Activated CD8-positive, alpha-beta memory T cell treated with anti-CD3 and anti-CD28 coated beads, Interleukin-2, amount 10 ng/mL, durations not matched to agents 7 days and 5 days (primary cell): ENCODE measurements at regions of chr1 and their contacts with region 1.

Region 1: DNA sequence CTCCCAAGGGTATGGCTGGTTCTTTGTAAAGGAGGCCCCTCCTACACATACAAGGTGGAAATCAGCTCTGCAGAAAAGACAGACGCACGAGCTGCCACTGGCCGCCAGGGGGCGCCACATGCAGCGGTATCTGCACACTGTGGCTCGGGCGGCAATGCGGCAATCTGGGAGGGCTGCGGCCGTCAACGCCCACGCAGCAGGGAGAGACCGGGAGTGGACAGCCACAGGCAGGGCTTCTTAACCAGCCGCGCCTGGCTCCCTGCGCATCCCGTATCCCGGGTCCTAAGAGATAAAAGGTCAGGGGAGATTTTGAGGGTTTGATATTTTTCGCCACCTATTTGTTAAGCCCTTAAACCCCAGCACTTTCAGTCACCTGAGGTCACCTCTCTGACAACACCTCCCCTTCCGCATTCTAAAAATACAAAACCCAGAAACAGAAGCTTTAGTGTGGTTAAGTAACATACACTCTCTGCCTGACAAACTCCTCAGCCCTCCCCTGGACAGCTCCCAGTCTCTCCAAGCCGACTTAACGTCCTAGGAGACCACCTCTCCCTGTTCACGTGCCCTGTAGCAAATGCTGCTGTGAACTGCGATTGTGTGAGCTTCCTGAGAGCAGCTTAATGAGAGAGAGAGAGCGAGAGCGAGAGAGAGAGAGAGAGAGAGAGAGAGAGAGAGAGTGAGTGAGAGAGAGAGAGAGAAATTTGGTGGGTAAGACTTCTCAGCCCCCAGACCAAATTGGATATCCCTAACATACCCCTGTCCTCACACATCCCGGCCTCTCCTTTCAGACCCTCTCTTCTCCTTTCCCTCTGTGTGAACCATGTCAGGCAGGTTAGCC is 13.5 kb upstream of the KCNA2 start:
- DNase-seq: peak; percentile 94
- ATAC-seq: peak; percentile 88
- H3K4me3 Mint-ChIP-seq: peak overlapping the region; percentile 77
- H3K27ac Mint-ChIP-seq: peak overlapping the region; percentile 93
- H3K4me1 Mint-ChIP-seq: peaks cover 48% of the 10 kb centered on the region
- H3K27me3 Mint-ChIP-seq: no peaks in the 10 kb centered on the region

Region 2: DNA sequence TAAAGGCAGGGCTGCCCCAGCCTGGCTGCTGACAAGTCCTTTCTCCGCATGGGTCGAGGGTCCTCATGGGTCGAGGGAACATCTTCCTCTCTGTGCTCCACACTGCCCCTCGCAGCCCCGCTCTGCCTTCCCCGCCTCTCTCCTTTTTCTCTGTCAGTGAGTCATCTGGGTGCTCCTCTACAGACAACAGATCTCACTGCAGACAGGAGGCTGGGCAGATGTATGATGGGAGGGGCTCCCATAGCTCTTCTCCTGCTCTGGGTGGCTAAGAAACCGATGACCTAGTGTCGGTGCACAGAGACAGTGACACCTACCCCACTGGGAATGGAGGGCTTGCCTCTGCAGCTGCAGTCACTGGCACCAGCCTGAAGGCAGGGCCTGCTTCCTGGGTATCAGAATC is 106.1 kb before region 1 on chr1:
- CTCF ChIA-PET with region 1: no interaction called
- DNase-seq: no peak
- ATAC-seq: no peak
- H3K4me3 Mint-ChIP-seq: no peak overlapping the region
- H3K27ac Mint-ChIP-seq: no peak overlapping the region
- H3K4me1 Mint-ChIP-seq: no peaks in the 10 kb centered on the region
- H3K27me3 Mint-ChIP-seq: peaks cover 3% of the 10 kb centered on the region

Region 3: DNA sequence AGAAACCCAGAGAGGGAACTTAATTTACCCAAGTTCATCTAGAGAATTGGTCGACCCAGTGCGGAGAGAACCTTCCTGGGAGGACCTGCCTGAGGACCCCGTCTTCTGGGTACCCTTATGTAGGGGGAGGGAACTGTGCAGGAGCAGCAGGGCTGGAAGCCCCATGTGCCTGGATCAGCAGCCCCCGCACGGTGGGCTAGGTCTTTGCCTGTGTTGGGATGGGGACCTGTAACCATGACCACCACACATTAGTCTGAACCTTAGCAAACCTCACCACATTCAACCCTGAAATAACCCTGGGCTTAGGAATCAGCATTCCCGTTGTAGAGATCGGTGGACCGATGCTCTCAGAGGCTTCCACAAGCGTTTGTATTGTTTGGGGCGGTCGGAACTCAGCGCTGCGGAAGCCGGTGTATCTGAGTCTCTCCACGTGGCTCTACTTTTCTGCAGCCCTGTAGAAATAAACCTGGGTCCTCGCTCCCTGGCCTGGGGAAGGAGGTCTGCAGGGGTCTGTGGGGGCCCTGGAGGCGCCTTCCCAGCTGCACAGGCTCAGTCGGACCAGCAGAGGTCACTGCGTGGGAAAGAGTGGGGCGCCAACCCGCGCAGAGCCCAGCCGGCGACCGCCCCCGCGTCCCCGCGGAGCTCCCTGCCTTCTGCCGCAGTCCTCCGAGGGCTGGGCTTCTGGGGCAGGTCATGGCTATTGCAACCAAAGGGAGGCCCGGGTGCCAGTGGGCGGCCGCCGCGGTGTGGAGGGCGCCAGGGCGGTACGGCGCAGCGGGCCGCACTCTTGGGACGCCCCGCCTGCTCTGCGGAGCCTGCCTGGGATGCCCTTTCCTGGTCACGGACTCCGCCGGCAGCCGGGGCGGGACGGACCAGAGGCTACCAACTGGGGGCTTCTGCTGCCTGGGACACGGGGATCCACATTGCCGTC is 64.5 kb before region 1 on chr1:
- CTCF ChIA-PET with region 1: interaction called, 70 read pairs
- DNase-seq: peak; percentile 64
- ATAC-seq: peak; percentile 90
- H3K4me3 Mint-ChIP-seq: no peak overlapping the region
- H3K27ac Mint-ChIP-seq: no peak overlapping the region
- H3K4me1 Mint-ChIP-seq: peaks cover 8% of the 10 kb centered on the region
- H3K27me3 Mint-ChIP-seq: peaks cover 54% of the 10 kb centered on the region

Region 4: GRCh38 chr1:110585481-110585880 is 34.1 kb before region 1 on chr1:
- CTCF ChIA-PET with region 1: no interaction called
- DNase-seq: no peak
- ATAC-seq: no peak
- H3K4me3 Mint-ChIP-seq: no peak overlapping the region
- H3K27ac Mint-ChIP-seq: no peak overlapping the region
- H3K4me1 Mint-ChIP-seq: no peaks in the 10 kb centered on the region
- H3K27me3 Mint-ChIP-seq: peaks cover 13% of the 10 kb centered on the region

Region 5: DNA sequence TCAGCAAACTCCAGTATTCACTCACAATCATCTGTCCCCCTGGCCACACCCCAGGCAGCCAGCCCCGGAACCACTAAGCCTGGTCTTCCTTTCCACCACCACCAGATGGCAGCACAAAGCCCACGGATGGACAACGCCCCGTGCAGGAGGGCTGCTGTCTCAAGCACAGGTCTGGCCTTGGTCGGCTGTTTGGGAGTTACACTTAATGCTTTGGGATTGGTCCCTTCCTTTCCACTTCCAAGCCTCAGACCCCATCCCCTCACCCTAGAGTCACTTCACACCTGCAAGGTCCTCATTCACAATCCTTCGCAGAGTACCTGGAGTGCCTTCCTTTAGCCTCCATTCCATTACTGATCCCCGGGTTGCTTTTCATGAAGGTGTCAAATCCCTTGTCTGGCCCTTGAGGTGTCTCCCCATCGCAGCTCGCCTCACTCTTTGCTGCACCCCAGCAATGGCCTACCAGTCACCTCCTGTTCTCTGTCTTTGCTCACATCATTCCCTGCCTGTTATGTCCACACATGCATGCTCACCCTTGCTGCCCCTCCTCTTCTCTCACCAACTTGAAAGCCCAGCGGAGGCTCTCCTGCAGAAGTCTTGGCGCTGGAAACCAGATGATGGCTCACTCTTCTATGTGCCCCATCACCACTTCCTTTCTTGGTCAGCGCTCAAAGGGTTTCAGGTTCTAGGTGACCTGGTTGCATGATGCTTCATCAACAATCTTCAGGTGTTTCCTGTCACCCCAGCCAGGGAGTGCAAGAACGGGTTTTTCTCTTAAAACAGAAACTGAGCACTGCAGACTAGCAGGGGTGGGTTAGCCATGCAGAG is 11.4 kb after region 1 on chr1:
- CTCF ChIA-PET with region 1: interaction called, 53 read pairs
- DNase-seq: peak; percentile 95
- ATAC-seq: peak; percentile 84
- H3K4me3 Mint-ChIP-seq: no peak overlapping the region
- H3K27ac Mint-ChIP-seq: no peak overlapping the region
- H3K4me1 Mint-ChIP-seq: peaks cover 33% of the 10 kb centered on the region
- H3K27me3 Mint-ChIP-seq: no peaks in the 10 kb centered on the region

Region 6: GRCh38 chr1:110645821-110646735 is 26.4 kb after region 1 on chr1:
- CTCF ChIA-PET with region 1: interaction called, 22 read pairs
- DNase-seq: no peak
- ATAC-seq: no peak
- H3K4me3 Mint-ChIP-seq: no peak overlapping the region
- H3K27ac Mint-ChIP-seq: no peak overlapping the region
- H3K4me1 Mint-ChIP-seq: peaks cover 45% of the 10 kb centered on the region
- H3K27me3 Mint-ChIP-seq: no peaks in the 10 kb centered on the region

Region 7: DNA sequence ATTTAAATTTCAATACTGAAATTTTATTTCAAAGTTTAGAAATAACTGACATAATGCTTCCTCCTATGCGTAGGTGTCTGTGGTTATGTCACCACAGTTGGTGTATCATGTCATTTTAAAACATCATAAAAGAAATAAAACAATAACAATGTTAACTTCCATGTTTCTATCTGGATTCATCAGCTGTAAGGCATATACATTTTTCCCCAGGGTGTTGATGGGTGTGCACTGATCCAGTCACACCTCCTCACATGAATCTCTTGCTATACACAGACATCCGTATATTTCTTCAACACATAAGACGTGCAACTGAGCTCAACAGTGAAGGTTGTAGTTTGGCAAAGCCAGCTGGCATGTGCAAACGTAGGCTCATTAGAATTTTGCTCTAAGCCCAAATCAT is 48.9 kb after region 1 on chr1:
- CTCF ChIA-PET with region 1: interaction called, 53 read pairs
- DNase-seq: no peak
- ATAC-seq: peak; percentile 40
- H3K4me3 Mint-ChIP-seq: peak overlapping the region; percentile 77
- H3K27ac Mint-ChIP-seq: peak overlapping the region; percentile 83
- H3K4me1 Mint-ChIP-seq: peaks cover 16% of the 10 kb centered on the region
- H3K27me3 Mint-ChIP-seq: no peaks in the 10 kb centered on the region

Region 8: DNA sequence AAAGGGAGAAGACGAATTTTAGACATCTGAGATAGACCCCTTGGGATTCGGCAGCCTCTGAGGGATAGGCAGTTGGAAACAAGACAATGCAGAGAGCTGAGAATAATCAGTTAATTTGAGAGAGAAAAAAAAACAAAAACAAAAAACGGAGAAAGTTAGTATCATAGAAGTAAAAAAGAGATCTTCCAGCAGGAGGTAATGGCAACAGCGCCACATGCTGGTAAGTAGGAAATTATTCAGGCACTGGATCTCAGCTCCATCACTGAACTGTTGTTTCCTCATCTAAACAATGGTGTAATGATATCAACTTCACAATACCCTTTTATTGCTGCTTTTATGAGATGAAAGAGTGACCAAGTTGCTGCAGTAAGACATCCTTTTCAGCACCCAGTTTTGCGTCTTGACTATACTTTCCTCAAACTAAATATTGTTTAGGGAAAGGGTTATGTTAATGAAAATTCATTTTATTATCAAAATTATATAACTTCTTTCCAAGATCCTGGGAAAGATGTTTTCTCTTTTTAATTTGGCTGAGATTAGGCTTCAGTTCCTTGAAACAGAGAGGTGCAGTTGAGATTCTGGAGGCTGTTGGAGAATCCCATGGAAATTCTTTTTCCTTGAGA is 146.5 kb after region 1 on chr1:
- CTCF ChIA-PET with region 1: interaction called, 194 read pairs
- DNase-seq: peak; percentile 67
- ATAC-seq: peak; percentile 85
- H3K4me3 Mint-ChIP-seq: peak overlapping the region; percentile 33
- H3K27ac Mint-ChIP-seq: peak overlapping the region; percentile 44
- H3K4me1 Mint-ChIP-seq: peaks cover 14% of the 10 kb centered on the region
- H3K27me3 Mint-ChIP-seq: peaks cover 30% of the 10 kb centered on the region

Region 9: GRCh38 chr1:110829955-110830553 is 210.4 kb after region 1 on chr1:
- CTCF ChIA-PET with region 1: interaction called, 18 read pairs
- DNase-seq: peak; percentile 46
- ATAC-seq: peak; percentile 83
- H3K4me3 Mint-ChIP-seq: no peak overlapping the region
- H3K27ac Mint-ChIP-seq: no peak overlapping the region
- H3K4me1 Mint-ChIP-seq: peaks cover 5% of the 10 kb centered on the region
- H3K27me3 Mint-ChIP-seq: peaks cover 5% of the 10 kb centered on the region